ENCODE measurements at regions of chr1 and their contacts with region 1.

Region 1: DNA sequence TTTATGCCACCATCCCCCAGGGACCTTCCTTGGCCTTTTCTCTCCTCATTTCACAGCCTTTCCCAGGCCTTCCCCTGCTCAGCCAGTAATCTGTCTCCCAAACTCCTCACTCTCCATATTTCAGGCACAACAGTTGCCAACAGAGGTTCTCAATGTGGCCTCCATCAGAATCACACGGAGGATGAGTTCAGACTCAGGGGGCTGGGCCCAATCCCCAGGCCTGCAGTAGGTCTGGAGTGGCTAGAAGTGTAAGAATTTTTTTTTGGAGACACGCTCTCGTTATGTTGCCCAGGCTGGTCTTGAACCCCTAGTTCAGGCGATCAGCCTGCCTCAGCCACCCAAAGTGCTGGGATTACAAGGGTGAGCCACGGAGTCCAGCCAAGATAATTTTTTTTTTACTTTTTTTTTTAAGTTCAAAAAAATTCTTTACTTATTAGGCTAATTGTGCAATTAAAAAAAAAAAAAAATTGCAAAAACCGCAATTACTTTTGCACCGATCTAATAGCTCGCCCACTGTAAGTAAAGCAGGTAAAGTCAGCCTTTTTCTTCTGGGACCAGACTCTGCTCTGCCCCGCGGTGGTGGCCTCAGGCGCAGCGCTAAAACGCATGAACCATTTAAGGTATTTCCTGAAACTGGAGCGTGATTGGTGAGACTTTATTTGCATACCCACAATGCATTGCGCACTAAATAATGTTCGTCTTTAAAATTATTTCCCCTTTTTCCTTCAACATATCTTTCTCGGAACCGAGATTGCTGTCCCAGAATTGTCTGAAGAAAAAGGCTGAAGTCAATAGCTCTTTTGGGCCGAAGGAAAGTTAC is 18.7 kb downstream of the KIAA2013 start:
- H3K4me3 ChIP-seq: no peak overlapping the region
- H3K27ac ChIP-seq: peak overlapping the region; percentile 92
- H3K4me1 ChIP-seq: no peaks in the 10 kb centered on the region
- CTCF ChIP-seq: peak; percentile 76

Region 2: GRCh38 chr1:11802973-11803885 is 104.3 kb before region 1 on chr1:
- CTCF ChIA-PET with region 1: interaction called, 3 read pairs
- POLR2A ChIA-PET with region 1: interaction called, 11 read pairs
- H3K4me3 ChIP-seq: peak overlapping the region; percentile 35
- H3K27ac ChIP-seq: no peak overlapping the region
- H3K4me1 ChIP-seq: peaks cover 4% of the 10 kb centered on the region
- CTCF ChIP-seq: no peak

Region 3: DNA sequence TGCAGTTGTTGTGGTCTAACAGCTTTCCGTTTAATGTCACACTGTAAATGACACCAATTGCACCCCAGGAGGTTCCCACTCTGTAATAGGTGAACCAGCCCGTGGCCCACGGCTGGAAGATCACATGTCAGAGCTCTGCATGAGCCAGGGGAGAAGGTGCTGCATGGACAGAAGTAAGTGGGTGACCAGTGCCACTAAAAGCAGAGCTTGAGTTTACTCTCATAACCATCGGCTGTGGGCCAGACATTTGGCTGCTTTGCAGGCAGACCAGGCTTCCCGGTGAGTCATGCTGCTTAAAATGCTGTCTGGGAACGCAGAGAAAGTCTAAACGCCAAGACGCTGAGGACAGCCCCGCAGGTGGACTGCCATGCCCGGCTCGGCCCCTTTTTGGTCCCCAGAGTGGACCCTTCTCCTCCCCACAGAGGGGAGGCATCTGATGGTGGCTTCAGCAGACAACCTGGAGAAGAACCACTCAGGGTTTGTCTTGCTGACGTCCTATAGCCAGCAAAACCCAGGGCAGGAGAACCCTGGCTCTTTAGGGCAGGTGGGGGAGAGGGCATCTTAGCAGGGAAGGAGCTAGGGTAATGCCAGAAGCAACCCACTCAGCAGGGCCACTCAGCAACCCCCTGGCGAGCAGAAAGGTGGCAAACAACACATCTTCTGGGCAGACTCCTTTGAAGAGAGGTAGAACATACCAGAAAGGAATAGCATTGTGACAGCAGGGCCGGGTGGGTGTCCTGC is 11.5 kb after region 1 on chr1:
- CTCF ChIA-PET with region 1: interaction called, 7 read pairs
- POLR2A ChIA-PET with region 1: interaction called, 40 read pairs
- H3K4me3 ChIP-seq: no peak overlapping the region
- H3K27ac ChIP-seq: no peak overlapping the region
- H3K4me1 ChIP-seq: no peaks in the 10 kb centered on the region
- CTCF ChIP-seq: no peak

Region 4: DNA sequence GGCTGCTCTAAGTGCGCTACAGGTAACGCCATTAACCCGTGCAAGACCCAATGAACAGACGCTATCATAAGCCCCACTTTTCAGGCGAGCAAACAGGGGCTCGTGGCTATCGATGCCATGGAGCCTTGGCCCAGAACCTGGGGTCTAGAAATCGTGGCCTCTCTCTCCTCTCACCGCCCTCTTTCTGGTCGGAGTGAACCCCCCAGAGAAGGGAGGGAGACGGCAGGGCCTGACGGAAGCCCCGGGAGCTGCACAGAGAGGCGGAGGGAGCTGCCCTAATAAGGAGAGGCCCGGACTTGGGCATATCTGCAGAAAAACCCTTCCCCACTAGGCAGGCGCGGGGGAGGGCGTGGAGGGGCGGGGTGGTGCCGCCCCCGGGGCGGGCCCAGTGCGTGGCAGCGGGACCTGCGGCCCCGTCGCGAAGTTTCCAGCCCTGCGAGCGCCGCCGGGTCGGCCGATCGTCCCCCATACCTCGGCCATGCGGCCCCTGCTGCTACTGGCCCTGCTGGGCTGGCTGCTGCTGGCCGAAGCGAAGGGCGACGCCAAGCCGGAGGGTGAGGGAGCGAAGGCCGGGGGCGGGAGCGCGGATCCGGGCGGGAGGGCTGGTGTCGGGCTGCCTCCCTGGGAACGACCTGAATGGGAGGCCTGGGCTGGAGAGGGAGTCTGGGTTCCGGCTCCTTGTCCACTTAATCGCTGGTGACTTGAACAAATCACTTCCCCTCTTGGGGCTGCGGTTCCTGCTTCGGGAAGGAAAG is 27.0 kb after region 1 on chr1 and contains the start of gene PLOD1:
- CTCF ChIA-PET with region 1: no interaction called
- POLR2A ChIA-PET with region 1: interaction called, 23 read pairs
- H3K4me3 ChIP-seq: peak within 1 kb of the TSS; percentile 69
- H3K27ac ChIP-seq: peak within 1 kb of the TSS; percentile 27; the same call in 1 of the 2 replicates
- H3K4me1 ChIP-seq: peaks cover 6% of the 10 kb centered on the region
- CTCF ChIP-seq: no peak

Region 5: DNA sequence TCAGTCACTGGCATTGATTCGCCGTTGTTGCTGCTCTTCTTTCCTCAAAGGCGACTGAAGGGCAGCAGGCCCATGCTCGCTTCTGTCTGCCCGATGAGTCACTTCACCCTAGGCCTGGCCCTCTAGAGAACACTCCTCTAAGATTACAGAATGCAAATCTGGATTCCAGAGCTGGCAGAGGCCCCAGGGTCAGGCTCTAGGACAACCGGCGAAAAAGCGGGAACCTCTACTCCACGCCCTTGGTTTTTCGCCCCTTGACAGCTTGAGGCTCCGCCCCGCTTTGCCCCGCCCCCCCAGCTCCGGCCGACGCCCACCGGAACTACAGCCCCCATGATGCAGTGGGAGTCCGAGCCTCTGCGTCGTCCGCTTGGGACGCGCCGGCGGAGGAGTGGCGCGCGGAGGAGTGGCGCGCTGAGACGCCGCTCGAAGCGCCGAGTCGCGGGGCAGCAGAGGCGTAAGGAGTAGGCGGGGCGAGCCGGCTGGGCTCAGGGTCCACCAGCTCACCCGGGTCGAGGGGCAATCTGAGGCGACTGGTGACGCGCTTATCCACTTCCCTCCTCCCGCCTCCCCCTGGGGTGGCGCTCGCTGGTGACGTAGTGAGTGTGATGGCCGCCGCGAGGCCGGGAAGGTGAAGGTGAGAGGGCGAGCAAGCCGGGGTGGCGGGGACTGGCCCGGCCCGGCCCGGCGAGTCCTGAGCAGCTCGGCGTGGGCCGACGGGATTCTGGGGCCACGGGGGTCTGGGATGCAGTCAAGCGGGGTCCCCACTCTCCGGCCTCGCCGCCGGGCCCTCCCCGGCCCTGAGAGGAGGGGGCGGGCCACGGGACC is 72.6 kb after region 1 on chr1 and contains the start of gene MFN2:
- CTCF ChIA-PET with region 1: interaction called, 4 read pairs
- POLR2A ChIA-PET with region 1: interaction called, 57 read pairs
- H3K4me3 ChIP-seq: peak within 1 kb of the TSS; percentile 97
- H3K27ac ChIP-seq: peak within 1 kb of the TSS; percentile 67
- H3K4me1 ChIP-seq: 0 out of 2 replicates have a peak, but pooled peaks cover 4% of the 10 kb centered on the region
- CTCF ChIP-seq: no peak